H1 (cell line): ENCODE measurements at regions of chr5 and their contacts with region 1.

Region 1: GRCh38 chr5:1325870-1326532 is 18.9 kb downstream of the CLPTM1L start:
- DNase-seq: no peak
- H3K4me3 ChIP-seq: no peak overlapping the region
- H3K27ac ChIP-seq: no peak overlapping the region
- H3K4me1 ChIP-seq: no peaks in the 10 kb centered on the region; a peak in 1 of 7 replicates
- H3K27me3 ChIP-seq: no peaks in the 10 kb centered on the region
- CTCF ChIP-seq: no peak
- EP300 ChIP-seq: no peak
- POLR2A ChIP-seq: no peak
- RAD21 ChIP-seq: no peak

Region 2: GRCh38 chr5:1315709-1316587 is 10.1 kb before region 1 on chr5:
- CTCF ChIA-PET with region 1: interaction called, 8 read pairs
- POLR2A ChIA-PET with region 1: interaction called, 15 read pairs
- DNase-seq: no peak
- H3K4me3 ChIP-seq: peak overlapping the region in 1 of 4 experiments; percentile 32; a peak in 2 of 8 replicates
- H3K27ac ChIP-seq: no peak overlapping the region; the same call in 1 of the 2 replicates
- H3K4me1 ChIP-seq: peaks cover 11 to 17% (median 14%) of the 10 kb centered on the region in 4 experiments
- H3K27me3 ChIP-seq: no peaks in the 10 kb centered on the region
- CTCF ChIP-seq: no peak
- EP300 ChIP-seq: no peak
- POLR2A ChIP-seq: peak in 1 of 2 experiments; percentile 31; a peak in 1 of 3 replicates
- RAD21 ChIP-seq: no peak